ENCODE measurements at regions of chr4 and their contacts with region 1.

Region 1: DNA sequence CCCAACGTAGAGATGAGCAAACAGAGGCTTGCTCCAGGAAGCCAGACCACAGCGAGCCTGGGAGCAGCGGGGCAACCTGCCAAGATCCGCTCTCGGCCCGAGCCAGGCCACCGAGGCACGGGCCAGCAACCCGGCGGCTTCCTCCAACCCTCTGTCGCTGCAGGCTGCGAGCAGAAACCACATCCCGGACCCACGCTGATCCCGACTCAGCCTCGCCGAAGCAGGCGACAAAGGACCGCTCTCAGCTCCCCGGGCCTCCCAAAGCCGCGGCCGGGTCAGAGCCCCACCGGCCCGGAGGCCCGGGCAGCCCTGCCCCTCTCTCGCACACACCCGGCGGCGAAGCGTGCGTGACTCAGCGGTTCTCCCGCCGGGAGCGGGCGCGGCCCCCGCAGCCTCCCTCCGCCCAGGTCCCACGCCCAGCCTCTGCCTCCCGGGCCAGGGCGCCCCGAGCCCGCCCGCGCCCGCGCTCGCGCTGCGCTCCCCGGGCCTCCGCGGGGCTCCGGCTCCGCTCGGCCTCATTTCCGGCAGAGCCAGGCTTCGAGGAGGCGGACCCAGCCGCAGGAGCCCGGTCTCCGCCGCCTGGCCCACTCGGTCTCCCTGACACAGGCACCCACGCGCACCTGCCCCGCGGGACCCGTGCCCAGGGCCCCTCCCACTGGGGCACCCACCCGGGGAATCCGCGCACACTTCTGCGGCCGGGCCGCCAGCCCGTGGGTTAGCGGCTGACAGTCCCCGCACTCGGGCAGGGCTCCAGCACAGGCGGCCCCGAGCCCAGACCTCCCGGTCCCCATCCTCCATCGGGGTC is 1.7 kb downstream of the PPP2R2C start:
- DNase-seq: peak; percentile 65 to 96 (median 75)

Region 2: GRCh38 chr4:6390356-6390755 is 80.3 kb before region 1 on chr4:
- intact Hi-C with region 1: loop called (anchors 5 kb)
- DNase-seq: peak in 5 of 10 donors; percentile 35 to 93 (median 78)

Region 3: DNA sequence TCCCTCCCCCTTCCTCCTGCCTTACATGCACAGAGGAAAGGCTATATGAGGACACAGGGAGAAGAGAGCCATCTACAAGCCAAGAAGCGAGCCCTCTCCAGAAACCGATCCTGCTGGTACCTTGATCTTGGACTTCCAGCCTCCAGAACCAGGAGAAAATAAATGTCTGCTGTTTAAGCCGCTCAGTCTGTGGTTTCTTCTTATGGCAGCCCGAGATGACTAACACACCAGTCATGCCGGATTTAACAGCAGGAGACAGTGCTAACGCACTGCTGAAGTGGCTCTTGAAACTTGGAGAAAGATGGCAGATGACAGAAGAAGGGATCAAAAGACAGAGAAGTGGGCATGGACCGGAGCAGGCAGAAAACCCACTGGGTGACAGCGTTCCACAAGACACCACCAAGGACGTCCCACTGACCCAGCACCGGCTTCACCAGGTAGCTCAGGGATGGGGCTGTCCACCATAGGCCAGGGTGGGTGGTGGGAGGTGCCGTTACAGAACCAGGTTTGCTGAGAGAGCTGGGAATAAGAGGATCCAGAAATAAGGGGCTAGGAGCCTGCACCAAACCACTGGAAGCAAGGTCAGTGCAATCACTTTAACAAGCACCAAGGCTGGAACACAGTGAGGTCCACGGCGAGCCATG is 98.1 kb after region 1 on chr4:
- intact Hi-C with region 1: no loop called
- DNase-seq: peak in 2 of 10 donors; percentile 35 to 68

Measured in posterior cingulate gyrus (tissue), 11 donors.